GM12878 (cell line): ENCODE measurements at regions of chr1 and their contacts with region 1.

Region 1: DNA sequence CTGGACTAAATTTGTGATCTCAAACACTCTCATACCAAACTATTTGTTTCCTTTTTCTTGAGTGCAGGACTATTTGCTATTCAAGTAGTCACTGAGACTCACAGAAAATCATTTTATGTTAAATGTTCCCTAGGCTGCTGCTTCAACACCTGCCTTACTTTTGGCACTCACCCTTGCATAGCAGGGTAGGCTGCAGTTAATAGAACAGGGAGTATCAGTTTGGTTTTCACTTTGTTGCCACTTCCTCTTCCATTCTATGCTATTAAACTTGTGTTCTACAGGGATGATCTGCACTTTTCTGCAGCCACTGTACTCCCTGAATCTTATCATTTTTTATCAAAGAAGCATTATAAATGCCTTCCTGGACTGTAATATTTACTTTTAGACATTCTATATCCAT is 148.7 kb upstream of the PRMT6 start:
- DNase-seq: peak; percentile 43
- ATAC-seq: peak; percentile 99
- H3K4me3 ChIP-seq: no peak overlapping the region
- H3K27ac ChIP-seq: no peak overlapping the region
- H3K4me1 ChIP-seq: peaks cover 8% of the 10 kb centered on the region
- H3K27me3 ChIP-seq: no peaks in the 10 kb centered on the region
- CTCF ChIP-seq: no peak
- EP300 ChIP-seq: 0 out of 4 replicates have a peak, but pooled peaks of 1 of the 2 experiments have one; percentile 8
- POLR2A ChIP-seq: no peak
- RAD21 ChIP-seq: no peak

Region 2: GRCh38 chr1:106680776-106681344 is 226.9 kb before region 1 on chr1:
- CTCF ChIA-PET with region 1: no interaction called
- POLR2A ChIA-PET with region 1: no interaction called
- RAD21 ChIA-PET with region 1: no interaction called
- SMC1A ChIA-PET with region 1: no interaction called
- in situ Hi-C with region 1: no loop called
- intact Hi-C with region 1: no loop called
- DNase-seq: no peak
- ATAC-seq: no peak
- H3K4me3 ChIP-seq: no peak overlapping the region
- H3K27ac ChIP-seq: no peak overlapping the region
- H3K4me1 ChIP-seq: no peaks in the 10 kb centered on the region
- H3K27me3 ChIP-seq: no peaks in the 10 kb centered on the region
- CTCF ChIP-seq: no peak
- EP300 ChIP-seq: no peak
- POLR2A ChIP-seq: no peak
- RAD21 ChIP-seq: no peak

Region 3: DNA sequence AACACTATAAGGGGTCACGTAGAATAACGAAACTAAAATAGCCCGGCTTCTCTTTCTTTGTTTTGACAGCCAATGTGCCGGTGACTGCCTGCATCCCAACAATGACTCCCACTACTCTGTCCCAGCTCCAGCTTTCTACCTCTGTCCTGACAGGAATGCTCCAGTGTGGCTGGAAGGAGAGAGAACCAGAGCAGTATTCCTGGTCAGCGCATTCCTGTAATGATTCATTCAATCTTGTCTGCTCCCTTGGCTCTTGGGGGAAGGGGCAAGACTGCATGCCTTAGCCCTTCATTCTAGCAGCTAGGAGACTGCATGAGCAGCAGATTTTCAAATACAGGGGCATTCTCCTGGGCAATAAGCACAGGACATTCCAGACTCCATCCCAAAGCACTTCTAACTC is 16.6 kb after region 1 on chr1:
- CTCF ChIA-PET with region 1: no interaction called
- POLR2A ChIA-PET with region 1: no interaction called
- RAD21 ChIA-PET with region 1: no interaction called
- SMC1A ChIA-PET with region 1: no interaction called
- in situ Hi-C with region 1: no loop called
- intact Hi-C with region 1: loop called (anchors 1 kb)
- DNase-seq: no peak
- ATAC-seq: no peak
- H3K4me3 ChIP-seq: no peak overlapping the region
- H3K27ac ChIP-seq: no peak overlapping the region
- H3K4me1 ChIP-seq: no peaks in the 10 kb centered on the region
- H3K27me3 ChIP-seq: no peaks in the 10 kb centered on the region
- CTCF ChIP-seq: no peak
- EP300 ChIP-seq: no peak
- POLR2A ChIP-seq: no peak
- RAD21 ChIP-seq: no peak